ENCODE measurements at regions of chr4 and their contacts with region 1.

Region 1: DNA sequence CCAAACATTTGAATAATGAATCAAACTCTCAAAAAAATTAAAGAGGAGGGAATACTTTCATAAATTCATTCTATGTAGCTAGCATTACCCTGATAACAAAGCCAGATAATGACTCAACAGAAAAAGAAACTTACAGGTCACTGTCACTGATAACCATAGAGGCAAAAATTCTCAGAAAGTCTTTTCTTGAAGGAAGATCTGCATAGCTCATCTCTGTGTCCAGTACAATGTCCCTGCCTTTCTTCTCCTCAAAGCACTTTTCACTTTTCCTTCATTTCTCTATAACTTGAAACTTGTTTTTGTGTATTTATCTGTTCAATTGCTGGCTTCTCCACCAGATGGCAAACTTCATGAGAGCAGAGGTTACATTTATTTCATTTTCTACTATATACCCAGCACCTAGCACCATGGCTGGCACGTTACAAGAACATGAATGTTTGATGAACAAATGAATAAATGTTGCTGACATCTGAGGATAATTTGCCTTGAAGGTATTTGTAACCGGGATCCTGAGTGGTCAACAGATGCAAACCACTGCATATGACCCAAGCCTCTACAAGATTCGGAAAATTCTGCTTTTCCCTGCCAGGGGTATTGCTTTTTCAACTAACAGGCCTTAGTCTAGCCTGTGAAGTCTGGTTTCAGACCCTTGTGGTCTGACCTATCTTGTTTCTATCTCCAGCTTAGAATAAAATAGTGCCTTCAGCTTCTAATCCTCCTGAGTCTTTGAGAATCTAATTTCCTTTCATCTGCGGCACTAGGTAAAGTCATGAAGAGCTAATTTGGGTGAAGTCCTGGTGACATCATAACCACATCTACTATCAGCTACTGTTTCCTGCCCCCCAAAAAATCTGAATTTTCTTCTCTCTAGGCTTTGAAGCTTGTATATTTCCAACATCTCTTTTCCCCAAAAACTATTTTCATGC is 52.5 kb upstream of the ANTXR2 start:
- DNase-seq: peak in 13 of 14 experiments; percentile 2 to 85 (median 24)
- ATAC-seq: peak; percentile 84
- H3K4me3 ChIP-seq: no peak overlapping the region
- H3K4me3 Mint-ChIP-seq: peak overlapping the region; percentile 42
- H3K27ac ChIP-seq: peak overlapping the region; percentile 77 to 88
- H3K27ac Mint-ChIP-seq: peak overlapping the region; percentile 94
- H3K4me1 ChIP-seq: peaks cover 26% of the 10 kb centered on the region
- H3K4me1 Mint-ChIP-seq: peaks cover 54% of the 10 kb centered on the region
- H3K27me3 ChIP-seq: no peaks in the 10 kb centered on the region
- H3K27me3 Mint-ChIP-seq: no peaks in the 10 kb centered on the region
- CTCF ChIP-seq: peak; percentile 85

Region 2: GRCh38 chr4:80072744-80073472 is 52.6 kb before region 1 on chr4 and contains the start of gene ANTXR2:
- CTCF ChIA-PET with region 1: interaction called, 7 read pairs
- POLR2A ChIA-PET with region 1: interaction called, 25 read pairs
- intact Hi-C with region 1: loop called in 1 of 2 experiments (anchors 5 kb)
- DNase-seq: peak; percentile 37 to 88 (median 67)
- ATAC-seq: peak; percentile 80
- H3K4me3 ChIP-seq: peak within 1 kb of the TSS; percentile 90
- H3K4me3 Mint-ChIP-seq: peak within 1 kb of the TSS; percentile 99
- H3K27ac ChIP-seq: peak within 1 kb of the TSS; percentile 78 to 82
- H3K27ac Mint-ChIP-seq: peak within 1 kb of the TSS; percentile 95
- H3K4me1 ChIP-seq: peaks cover 22% of the 10 kb centered on the region
- H3K4me1 Mint-ChIP-seq: peaks cover 79% of the 10 kb centered on the region
- H3K27me3 ChIP-seq: no peaks in the 10 kb centered on the region
- H3K27me3 Mint-ChIP-seq: no peaks in the 10 kb centered on the region
- CTCF ChIP-seq: no peak
- total RNA-seq, gene ANTXR2: 15.3 to 16.7 TPM

Region 3: GRCh38 chr4:80144676-80145470 is 19.4 kb after region 1 on chr4:
- CTCF ChIA-PET with region 1: interaction called, 8 read pairs
- POLR2A ChIA-PET with region 1: interaction called, 33 read pairs
- intact Hi-C with region 1: loop called in 1 of 2 experiments (anchors 2 kb)
- DNase-seq: no peak
- ATAC-seq: no peak
- H3K4me3 ChIP-seq: no peak overlapping the region
- H3K4me3 Mint-ChIP-seq: no peak overlapping the region
- H3K27ac ChIP-seq: no peak overlapping the region
- H3K27ac Mint-ChIP-seq: no peak overlapping the region
- H3K4me1 ChIP-seq: peaks cover 7% of the 10 kb centered on the region
- H3K4me1 Mint-ChIP-seq: peaks cover 32% of the 10 kb centered on the region
- H3K27me3 ChIP-seq: no peaks in the 10 kb centered on the region
- H3K27me3 Mint-ChIP-seq: no peaks in the 10 kb centered on the region
- CTCF ChIP-seq: no peak

Region 4: GRCh38 chr4:80202190-80202711 is 76.7 kb after region 1 on chr4:
- CTCF ChIA-PET with region 1: interaction called, 23 read pairs
- POLR2A ChIA-PET with region 1: interaction called, 28 read pairs
- intact Hi-C with region 1: loop called in 1 of 2 experiments (anchors 5 kb)
- DNase-seq: peak; percentile 59 to 90 (median 76)
- ATAC-seq: peak; percentile 64
- H3K4me3 ChIP-seq: peak overlapping the region; percentile 79
- H3K4me3 Mint-ChIP-seq: peak overlapping the region; percentile 89
- H3K27ac ChIP-seq: peak overlapping the region; percentile 53 to 61
- H3K27ac Mint-ChIP-seq: peak overlapping the region; percentile 71
- H3K4me1 ChIP-seq: peaks cover 22% of the 10 kb centered on the region
- H3K4me1 Mint-ChIP-seq: peaks cover 27% of the 10 kb centered on the region
- H3K27me3 ChIP-seq: peaks cover 6 to 7% of the 10 kb centered on the region in 2 experiments
- H3K27me3 Mint-ChIP-seq: peaks cover 11% of the 10 kb centered on the region
- CTCF ChIP-seq: peak; percentile 73

Region 5: DNA sequence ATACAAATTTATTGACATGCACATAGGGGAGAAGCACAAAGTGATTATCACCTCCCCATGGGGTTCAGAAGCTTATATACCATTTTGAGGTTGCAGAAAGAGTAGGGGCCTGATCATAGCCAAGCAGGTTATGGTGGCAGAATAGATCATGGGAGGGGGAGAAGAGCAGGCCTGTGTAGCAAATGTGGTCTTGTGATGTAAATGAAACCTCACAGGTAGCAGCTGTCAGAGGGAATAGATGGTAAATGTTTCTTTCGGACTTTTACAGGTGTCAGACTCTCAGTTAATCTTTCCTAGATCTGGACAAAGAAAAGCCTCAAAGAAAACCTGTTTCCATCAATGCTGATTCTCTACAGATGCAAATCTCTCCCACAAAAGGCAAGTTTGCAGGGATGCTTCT is 294.4 kb after region 1 on chr4:
- CTCF ChIA-PET with region 1: no interaction called
- POLR2A ChIA-PET with region 1: no interaction called
- intact Hi-C with region 1: no loop called
- DNase-seq: no peak
- ATAC-seq: no peak
- H3K4me3 ChIP-seq: no peak overlapping the region
- H3K4me3 Mint-ChIP-seq: no peak overlapping the region
- H3K27ac ChIP-seq: no peak overlapping the region
- H3K27ac Mint-ChIP-seq: no peak overlapping the region
- H3K4me1 ChIP-seq: peaks cover 6% of the 10 kb centered on the region
- H3K4me1 Mint-ChIP-seq: peaks cover 14% of the 10 kb centered on the region
- H3K27me3 ChIP-seq: no peaks in the 10 kb centered on the region
- H3K27me3 Mint-ChIP-seq: no peaks in the 10 kb centered on the region
- CTCF ChIP-seq: no peak

Measured in CD4-positive, alpha-beta T cell (primary cell).